Dorsolateral prefrontal cortex (tissue), 120 donors: ENCODE measurements at regions of chr17 and their contacts with region 1.

Region 1: GRCh38 chr17:78865682-78866390 is 25.2 kb upstream of the USP36 start:
- DNase-seq: peak; percentile 77 to 93 (median 86)
- H3K4me3 ChIP-seq: peak overlapping the region in 39 of 59 donors; percentile 8 to 49 (median 28)
- H3K27ac ChIP-seq: peak overlapping the region in 58 of 59 donors; percentile 12 to 100 (median 82)
- H3K27me3 ChIP-seq: no peaks in the 10 kb centered on the region
- CTCF ChIP-seq: peak; percentile 56 to 99 (median 95)

Region 2: DNA sequence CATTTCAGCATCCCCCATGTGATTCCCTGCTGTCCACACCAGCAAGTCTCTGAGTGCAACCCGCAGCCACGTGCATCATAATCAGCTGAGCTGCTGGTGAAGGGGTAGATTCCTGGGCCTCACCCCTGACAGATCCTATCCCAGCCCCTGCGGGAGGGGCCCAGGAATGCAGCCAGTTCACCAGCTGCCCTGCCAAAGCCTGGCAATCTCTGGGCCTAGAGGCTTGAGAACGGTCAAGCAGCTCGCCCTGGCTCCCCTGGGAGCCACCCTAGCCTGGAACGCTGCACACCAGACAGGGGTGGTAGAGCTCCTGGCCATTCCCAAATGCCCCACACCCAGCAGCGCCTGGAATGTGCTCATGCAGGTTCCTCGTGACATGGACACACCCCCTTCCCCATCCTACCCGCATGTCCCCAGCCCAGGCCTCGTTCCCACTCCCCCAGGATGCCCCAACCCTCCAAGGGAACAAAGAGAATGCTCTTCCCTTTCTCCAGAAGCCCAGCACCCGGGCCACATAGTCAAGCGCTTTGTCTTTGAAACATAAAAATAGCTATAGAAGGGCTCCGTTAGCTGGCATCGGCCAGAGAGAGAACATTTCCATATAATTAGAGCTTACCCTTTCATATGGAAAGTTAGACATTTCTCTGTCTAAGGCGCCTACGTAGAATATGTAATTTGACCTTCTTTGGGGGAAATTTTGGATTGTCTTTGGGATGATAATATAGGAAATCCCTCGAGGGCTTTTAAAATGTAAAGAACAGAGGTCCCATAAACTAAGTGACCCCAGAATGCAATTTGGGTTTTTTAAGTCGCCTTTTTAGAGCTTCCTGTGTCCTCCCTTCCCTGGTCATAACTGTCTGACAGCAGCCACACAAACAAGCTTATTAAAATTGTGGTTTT is 33.8 kb after region 1 on chr17:
- intact Hi-C with region 1: loop called in 1 of 2 experiments (anchors 2 kb)
- DNase-seq: peak in 6 of 10 donors; percentile 36 to 74 (median 62)
- H3K4me3 ChIP-seq: peak overlapping the region in 2 of 59 donors; percentile 5 to 14
- H3K27ac ChIP-seq: peak overlapping the region; percentile 20 to 100 (median 88)
- H3K27me3 ChIP-seq: no peaks in the 10 kb centered on the region
- CTCF ChIP-seq: peak in 1 of 56 donors; percentile 16

Region 3: DNA sequence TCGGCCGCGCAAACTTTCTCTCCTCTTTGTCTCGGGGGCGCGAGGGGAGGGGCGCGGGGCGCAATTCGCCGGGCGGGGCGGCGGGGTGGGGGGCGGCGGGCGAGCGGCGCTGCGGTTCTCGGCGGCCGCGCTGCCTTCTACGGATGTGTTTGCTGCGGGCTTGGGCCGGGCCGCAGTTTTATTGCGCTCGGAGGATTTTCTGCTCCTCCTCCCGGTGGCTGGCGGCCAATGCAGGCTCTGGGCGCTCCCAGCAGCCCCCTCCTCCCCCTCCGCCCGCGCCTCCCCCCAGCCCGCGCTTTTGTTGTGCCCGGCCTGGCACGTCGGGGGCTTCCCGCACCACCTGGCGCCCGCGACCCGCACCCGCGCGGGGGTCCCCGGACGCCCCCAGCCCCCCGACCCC is 59.4 kb after region 1 on chr17 and contains the start of gene TIMP2:
- intact Hi-C with region 1: loop called (anchors 5 to 10 kb)
- DNase-seq: peak; percentile 68 to 94 (median 88)
- H3K4me3 ChIP-seq: peak within 1 kb of the TSS; percentile 54 to 82 (median 70)
- H3K27ac ChIP-seq: peak within 1 kb of the TSS; percentile 83 to 99 (median 95)
- H3K27me3 ChIP-seq: no peaks in the 10 kb centered on the region
- CTCF ChIP-seq: peak in 38 of 56 donors; percentile 13 to 49 (median 32)
- total RNA-seq, gene TIMP2: 97.8 to 275 (median 166) TPM

Region 4: GRCh38 chr17:78970834-78971773 is 105.3 kb after region 1 on chr17:
- intact Hi-C with region 1: loop called (anchors 2 to 5 kb)
- DNase-seq: peak; percentile 79 to 87 (median 84)
- H3K4me3 ChIP-seq: peak overlapping the region in 11 of 59 donors; percentile 7 to 35 (median 12)
- H3K27ac ChIP-seq: peak overlapping the region in 50 of 59 donors; percentile 3 to 90 (median 66)
- H3K27me3 ChIP-seq: no peaks in the 10 kb centered on the region
- CTCF ChIP-seq: peak; percentile 84 to 98 (median 93)

Region 5: DNA sequence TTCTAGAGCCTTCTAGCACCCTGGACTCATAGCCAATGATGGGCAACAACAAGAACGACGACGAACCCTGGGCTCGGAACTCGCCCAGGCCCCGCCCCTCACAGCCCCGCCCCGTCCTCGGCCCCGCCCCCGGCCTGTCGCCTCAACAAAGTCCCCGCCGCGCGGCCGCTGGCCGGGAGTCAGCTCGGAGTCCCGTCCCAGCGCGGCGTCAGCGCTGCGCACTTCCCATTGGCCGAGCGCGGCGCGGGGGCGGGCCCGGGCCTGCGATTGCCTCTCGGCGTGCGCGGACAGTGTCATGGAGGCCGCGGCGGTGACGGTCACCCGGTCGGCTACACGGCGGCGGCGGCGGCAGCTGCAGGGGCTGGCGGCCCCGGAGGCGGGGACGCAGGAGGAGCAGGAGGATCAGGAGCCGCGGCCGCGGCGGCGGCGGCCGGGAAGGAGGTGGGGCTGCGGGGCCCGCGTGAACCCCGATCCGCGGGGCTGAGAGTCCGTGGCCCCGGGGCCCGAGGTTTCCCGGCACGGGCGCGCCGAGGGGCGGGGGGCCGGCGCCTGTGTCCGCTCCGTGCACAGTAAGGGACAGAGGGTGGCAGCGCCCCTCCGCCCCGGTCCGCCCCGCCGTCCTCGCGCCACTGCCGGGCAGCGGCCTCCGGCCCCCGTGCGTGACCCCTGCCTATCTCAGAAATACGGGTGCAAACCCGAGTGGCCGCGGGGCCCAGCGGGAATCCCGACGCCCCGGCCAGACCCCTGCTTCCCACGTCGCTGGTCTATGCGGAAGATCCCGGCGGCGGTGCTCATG is 209.0 kb after region 1 on chr17 and contains the start of gene ENGASE:
- intact Hi-C with region 1: loop called in 1 of 2 experiments (anchors 10 kb)
- DNase-seq: peak; percentile 89 to 98 (median 94)
- H3K4me3 ChIP-seq: peak within 1 kb of the TSS; percentile 47 to 96 (median 82)
- H3K27ac ChIP-seq: peak within 1 kb of the TSS; percentile 20 to 93 (median 83)
- H3K27me3 ChIP-seq: no peaks in the 10 kb centered on the region
- CTCF ChIP-seq: peak in 13 of 56 donors; percentile 6 to 44 (median 16)
- total RNA-seq, gene ENGASE: 27.0 to 112 (median 43.6) TPM

Region 6: DNA sequence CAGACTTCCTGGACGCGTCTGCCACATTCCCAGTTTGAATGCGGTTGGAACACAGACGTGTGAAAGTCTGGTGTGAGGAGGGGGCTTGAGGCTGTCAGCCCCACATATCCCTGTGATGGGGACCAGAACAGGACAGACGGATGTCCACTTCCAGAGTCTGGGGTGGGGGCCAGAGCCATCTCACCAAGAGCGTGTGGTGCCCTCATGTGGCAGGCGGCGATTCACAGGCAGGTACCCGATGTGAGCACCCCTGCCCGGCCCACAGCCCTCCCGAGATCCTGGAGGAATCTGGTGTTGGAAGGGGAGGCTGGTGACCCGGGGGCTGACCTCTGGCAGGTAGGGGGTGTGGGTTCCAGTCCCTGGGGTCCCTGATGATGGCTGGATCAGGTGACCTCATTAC is 260.3 kb after region 1 on chr17:
- intact Hi-C with region 1: no loop called
- DNase-seq: no peak
- H3K4me3 ChIP-seq: no peak overlapping the region
- H3K27ac ChIP-seq: no peak overlapping the region
- H3K27me3 ChIP-seq: peaks cover 0 to 22% (median 0%) of the 10 kb centered on the region in 45 donors
- CTCF ChIP-seq: peak in 4 of 56 donors; percentile 12 to 30 (median 22)